Posterior vena cava (tissue), 2 donors: ENCODE measurements at regions of chr2 and their contacts with region 1.

Region 1: DNA sequence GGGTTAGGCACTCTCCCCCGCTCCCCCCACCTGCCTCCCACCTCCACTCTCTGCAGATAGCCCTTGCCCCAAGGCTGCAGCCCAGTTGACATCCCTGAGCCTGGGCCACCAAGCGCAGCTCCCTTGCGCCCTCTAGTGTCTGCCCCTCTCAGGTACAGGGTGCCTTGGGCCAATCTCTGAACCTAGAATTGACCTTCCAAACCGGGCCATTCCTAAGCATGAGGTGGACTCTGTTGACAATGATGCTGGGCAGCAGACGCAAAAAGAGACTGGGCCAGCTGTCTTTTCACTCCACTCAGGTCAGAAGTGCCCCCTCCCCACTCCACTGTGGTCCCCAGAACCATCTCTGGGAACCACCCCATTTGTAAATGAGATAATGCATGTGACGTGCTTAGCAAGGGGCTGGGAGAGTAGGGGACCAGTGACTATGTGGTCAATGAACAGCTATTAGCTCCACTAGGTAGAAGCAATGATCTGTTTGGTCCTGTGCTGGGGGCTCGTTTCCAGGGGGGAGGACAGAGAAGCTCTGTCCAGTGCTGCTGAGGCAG is 43.3 kb upstream of the PLB1 start:
- DNase-seq: peak; percentile 94

Region 2: DNA sequence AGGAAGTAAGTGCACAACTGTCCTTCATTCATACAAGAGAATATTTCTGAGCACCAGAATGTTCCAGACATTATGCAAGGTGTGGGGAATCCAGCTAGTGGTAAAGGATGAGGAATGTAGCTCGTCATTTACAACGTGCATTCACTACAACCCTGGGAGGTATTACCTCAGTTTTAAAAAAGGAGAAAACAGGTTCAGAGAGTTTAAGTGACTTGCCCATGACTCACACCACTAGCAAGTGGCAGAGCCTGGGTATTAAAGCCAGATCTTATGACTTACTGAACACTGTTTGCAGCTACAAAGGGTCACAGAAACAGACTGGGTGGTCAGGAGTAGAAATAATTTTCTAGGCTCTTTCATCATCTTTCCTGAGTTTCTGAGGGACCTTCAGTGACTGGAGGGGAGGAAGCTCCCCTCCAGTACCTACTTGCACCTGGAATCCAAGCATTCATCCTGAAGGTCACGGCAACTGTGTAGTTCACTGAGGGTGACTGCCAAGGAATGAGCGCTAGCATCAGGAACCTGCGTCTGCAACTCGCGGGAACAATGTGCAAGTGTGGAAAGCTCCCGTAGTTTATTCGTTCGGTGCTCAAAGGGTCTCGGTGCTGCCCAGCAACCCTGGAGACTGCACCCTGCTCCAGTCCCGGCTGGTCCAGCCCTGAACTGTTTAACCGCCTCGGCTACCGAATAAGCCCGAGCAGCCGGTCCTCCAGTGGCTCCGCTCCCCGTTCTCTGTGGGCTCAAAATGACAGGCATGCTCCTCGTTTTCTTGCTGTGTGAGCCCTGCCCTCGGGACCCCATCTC is 824.4 kb before region 1 on chr2:
- intact Hi-C with region 1: no loop called
- DNase-seq: no peak

Region 3: DNA sequence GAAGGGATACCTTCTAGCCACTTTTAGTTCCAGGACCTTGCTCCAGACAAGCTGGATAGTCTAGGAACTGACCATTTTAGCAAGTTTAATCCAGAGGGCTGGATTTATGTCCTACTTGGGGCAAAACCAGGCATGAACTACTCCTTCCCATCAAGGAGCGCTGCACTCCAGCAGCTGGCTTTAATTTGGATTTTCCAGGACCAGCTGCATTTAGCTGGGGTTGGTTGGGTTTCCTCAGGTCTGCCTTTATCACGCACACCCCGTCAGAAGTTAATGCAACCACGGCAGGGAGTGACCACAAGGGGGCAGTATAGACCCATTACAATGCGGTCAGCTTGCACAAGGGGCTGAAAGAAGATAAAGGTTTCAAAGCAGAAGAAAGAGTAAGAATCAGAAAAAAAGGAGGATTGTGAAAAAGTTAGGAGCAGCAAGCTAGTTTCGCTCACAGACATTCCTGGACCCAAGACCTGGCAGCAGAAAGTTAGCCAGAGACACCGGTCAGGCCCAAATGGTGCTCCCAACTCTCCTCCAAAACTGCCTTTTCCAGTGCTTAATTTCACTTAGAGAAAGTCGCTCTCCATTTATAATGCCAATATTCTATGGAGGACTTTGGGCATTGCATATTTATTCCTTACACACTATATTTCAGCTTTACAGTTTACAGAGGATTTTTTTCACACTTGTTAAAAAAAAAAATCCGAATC is 748.8 kb before region 1 on chr2:
- intact Hi-C with region 1: loop called (anchors 5 to 10 kb)
- DNase-seq: peak; percentile 91